Activated CD4-positive, alpha-beta T cell treated with anti-CD3 and anti-CD28 coated beads, Interleukin-2, amount 10 ng/mL, durations not matched to agents 7 days and 5 days (primary cell): ENCODE measurements at regions of chr2 and their contacts with region 1.

Region 1: GRCh38 chr2:201231781-201232466 is 28.4 kb upstream of the CASP8 start:
- DNase-seq: peak; percentile 97
- H3K4me3 Mint-ChIP-seq: peak overlapping the region; percentile 92
- H3K27ac Mint-ChIP-seq: peak overlapping the region; percentile 90
- H3K4me1 Mint-ChIP-seq: peaks cover 55% of the 10 kb centered on the region
- H3K27me3 Mint-ChIP-seq: no peaks in the 10 kb centered on the region

Region 2: DNA sequence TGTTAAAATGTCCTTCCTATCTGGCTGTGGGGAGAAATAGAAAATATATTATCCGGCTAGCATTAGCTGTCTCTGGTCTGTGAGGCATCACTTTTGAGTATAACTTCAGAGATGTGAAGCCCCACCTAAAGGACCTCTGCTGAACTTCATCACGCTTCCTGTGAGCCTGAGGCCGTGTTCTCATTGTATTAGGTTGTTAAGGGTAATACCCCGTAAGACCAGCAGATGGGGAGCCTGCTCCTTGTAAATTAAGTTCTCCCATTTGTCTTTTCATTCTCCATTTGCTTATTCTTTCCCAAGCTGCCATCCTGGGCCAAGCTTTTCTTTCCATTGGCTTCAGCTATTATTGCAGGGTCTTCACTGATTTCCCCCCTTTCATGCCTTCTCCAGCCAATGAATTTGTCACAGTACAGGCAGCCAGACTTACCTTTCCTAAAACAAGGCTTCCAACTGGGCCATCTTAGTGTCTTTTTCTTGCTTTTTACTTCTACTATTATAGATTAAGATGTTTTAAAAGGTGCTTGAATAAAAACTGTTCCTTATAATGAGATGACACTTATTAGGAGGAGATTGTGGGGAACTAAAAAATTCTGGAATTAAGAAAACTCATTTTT is 330.4 kb before region 1 on chr2:
- CTCF ChIA-PET with region 1: interaction called, 17 read pairs
- POLR2A ChIA-PET with region 1: interaction called, 3 read pairs
- DNase-seq: peak; percentile 87
- H3K4me3 Mint-ChIP-seq: no peak overlapping the region
- H3K27ac Mint-ChIP-seq: peak overlapping the region; percentile 65
- H3K4me1 Mint-ChIP-seq: peaks cover 12% of the 10 kb centered on the region
- H3K27me3 Mint-ChIP-seq: no peaks in the 10 kb centered on the region

Region 3: GRCh38 chr2:201194097-201194496 is 37.8 kb before region 1 on chr2:
- CTCF ChIA-PET with region 1: interaction called, 31 read pairs
- POLR2A ChIA-PET with region 1: interaction called, 6 read pairs
- DNase-seq: no peak
- H3K4me3 Mint-ChIP-seq: peak overlapping the region; percentile 65
- H3K27ac Mint-ChIP-seq: peak overlapping the region; percentile 92
- H3K4me1 Mint-ChIP-seq: peaks cover 70% of the 10 kb centered on the region
- H3K27me3 Mint-ChIP-seq: no peaks in the 10 kb centered on the region

Region 4: DNA sequence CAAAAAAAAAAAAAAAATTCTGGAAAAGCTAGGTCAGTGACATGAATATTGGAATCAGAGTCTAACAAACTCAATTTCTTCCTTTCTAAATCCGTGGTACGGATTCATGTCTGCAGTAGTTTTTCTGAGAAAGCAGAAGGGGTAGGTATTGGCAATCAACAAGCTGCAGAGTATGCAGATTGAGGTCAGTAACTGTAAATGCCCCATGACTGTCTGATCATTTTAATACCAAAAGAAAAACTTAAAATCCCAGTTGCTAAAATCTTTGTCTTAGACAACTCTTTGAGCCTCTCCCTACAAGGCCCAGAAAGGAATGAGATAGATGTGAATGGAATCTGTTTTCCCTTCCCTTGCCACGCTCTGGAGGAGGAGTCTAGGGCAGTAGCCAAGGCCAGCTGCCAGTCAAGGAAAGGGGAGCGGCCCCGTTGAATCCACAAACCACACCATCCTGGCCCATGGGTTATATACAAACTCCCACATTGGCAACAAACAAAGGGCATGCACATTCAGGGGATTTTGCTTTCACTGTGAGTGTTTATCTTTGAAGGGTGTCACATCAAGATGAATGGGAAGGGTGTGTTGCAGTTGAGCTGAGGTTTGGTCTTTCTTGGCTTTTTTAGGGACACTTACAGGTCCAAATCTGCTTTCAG is 22.3 kb after region 1 on chr2:
- CTCF ChIA-PET with region 1: interaction called, 39 read pairs
- POLR2A ChIA-PET with region 1: interaction called, 40 read pairs
- DNase-seq: peak; percentile 40
- H3K4me3 Mint-ChIP-seq: no peak overlapping the region
- H3K27ac Mint-ChIP-seq: peak overlapping the region; percentile 95
- H3K4me1 Mint-ChIP-seq: peaks cover 85% of the 10 kb centered on the region
- H3K27me3 Mint-ChIP-seq: no peaks in the 10 kb centered on the region

Region 5: GRCh38 chr2:201363857-201364560 is 132.1 kb after region 1 on chr2:
- CTCF ChIA-PET with region 1: interaction called, 33 read pairs
- POLR2A ChIA-PET with region 1: no interaction called
- DNase-seq: peak; percentile 55
- H3K4me3 Mint-ChIP-seq: no peak overlapping the region
- H3K27ac Mint-ChIP-seq: peak overlapping the region; percentile 72
- H3K4me1 Mint-ChIP-seq: peaks cover 51% of the 10 kb centered on the region
- H3K27me3 Mint-ChIP-seq: no peaks in the 10 kb centered on the region

Region 6: GRCh38 chr2:201517094-201517493 is 285.2 kb after region 1 on chr2:
- CTCF ChIA-PET with region 1: no interaction called
- POLR2A ChIA-PET with region 1: no interaction called
- DNase-seq: no peak
- H3K4me3 Mint-ChIP-seq: no peak overlapping the region
- H3K27ac Mint-ChIP-seq: no peak overlapping the region
- H3K4me1 Mint-ChIP-seq: no peaks in the 10 kb centered on the region
- H3K27me3 Mint-ChIP-seq: no peaks in the 10 kb centered on the region